Activated CD8-positive, alpha-beta memory T cell treated with anti-CD3 and anti-CD28 coated beads, Interleukin-2, amount 10 ng/mL, durations not matched to agents 7 days and 5 days (primary cell): ENCODE measurements at regions of chr17 and their contacts with region 1.

Region 1: DNA sequence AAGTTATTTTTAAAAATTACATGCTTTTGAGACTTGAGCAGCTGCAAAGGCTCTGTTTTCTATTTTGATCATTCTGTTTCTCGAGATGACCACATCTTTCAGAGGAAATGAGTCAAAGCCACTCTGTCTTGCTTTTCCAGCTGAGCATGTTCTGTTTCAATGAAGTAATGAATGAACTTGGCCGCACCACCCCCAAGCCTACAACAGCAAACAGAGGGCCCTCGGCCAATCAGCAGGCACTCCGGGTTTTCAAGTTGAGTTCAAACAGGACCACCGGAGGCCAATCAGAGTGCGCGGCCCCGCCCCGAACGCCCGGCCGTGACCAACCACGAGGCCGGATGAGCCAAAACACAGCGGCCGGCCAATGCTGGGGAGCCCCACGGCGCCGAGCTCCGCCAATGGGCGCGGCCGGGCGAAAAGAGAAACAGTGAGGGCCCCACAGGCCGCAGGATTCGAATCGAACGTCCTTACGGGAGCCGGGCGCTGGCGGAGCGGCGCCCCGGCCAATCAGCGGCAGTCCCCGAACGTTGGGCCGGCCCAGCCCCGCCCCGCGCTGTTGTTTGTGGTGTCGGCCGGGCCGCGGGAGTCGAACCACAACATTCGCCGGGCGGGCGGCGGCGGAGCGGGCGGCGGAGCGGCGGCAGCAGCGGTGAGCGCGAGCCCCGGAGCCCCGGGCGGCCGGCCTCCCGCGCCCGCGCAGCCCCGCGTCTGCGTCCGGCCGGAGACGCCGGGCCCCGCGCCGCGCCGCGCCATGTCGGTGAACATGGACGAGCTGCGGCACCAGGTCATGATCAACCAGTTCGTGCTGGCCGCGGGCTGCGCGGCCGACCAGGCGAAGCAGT is at the start of gene UBALD2:
- DNase-seq: peak; percentile 100
- ATAC-seq: peak; percentile 82
- H3K4me3 Mint-ChIP-seq: peak within 1 kb of the TSS; percentile 92
- H3K27ac Mint-ChIP-seq: peak within 1 kb of the TSS; percentile 99
- H3K4me1 Mint-ChIP-seq: peaks cover 54% of the 10 kb centered on the region
- H3K27me3 Mint-ChIP-seq: no peaks in the 10 kb centered on the region
- total RNA-seq, gene UBALD2: 260 to 406 TPM

Region 2: DNA sequence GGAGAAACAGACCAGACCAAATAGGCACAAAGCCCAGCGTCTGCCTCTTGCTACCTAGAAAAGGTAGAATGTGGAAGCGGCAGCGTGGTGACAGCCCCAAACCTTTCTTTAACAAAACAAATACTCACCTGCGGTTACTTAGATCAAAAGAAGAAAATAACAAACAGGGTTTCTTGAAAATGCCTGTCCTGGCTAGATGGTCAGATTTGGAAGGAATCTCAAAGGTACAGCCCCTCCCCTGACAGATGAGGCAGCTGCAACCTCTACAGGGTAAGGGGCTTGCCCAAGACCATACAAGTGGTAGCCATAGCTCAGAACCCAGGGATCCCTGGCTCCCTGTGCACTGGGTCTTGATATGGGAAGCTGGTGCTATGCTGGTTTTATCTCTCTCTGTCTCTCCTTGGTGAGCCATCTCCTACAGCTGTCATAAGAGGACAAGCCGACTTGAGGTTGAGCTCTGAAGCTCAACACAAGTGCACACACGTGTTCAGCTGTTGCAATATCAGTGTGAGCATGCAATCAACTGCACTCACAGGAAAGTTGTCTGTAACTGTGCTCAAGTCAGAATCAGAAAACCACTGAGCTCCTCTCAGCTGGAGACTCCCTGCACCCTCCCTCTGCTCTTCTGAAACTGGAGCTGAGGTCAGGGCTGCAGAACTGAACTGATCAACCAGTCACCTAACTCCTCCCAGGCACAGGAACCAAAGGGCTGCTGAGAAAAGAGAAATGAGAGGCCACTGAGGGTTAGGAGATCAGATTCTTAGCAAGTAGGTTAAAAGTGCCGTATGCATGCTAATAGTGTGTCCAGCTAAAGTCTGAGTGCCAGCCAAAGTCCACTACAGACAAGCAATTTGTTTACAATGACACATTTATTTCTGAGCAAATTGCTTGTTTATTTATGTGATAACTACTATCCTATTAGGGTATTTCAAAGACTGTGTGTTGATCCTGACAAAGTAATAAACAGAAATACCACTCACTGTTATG is 18.6 kb before region 1 on chr17:
- CTCF ChIA-PET with region 1: interaction called, 83 read pairs
- DNase-seq: peak; percentile 94
- ATAC-seq: peak; percentile 98
- H3K4me3 Mint-ChIP-seq: peak overlapping the region; percentile 50
- H3K27ac Mint-ChIP-seq: peak overlapping the region; percentile 90
- H3K4me1 Mint-ChIP-seq: peaks cover 73% of the 10 kb centered on the region
- H3K27me3 Mint-ChIP-seq: no peaks in the 10 kb centered on the region

Region 3: DNA sequence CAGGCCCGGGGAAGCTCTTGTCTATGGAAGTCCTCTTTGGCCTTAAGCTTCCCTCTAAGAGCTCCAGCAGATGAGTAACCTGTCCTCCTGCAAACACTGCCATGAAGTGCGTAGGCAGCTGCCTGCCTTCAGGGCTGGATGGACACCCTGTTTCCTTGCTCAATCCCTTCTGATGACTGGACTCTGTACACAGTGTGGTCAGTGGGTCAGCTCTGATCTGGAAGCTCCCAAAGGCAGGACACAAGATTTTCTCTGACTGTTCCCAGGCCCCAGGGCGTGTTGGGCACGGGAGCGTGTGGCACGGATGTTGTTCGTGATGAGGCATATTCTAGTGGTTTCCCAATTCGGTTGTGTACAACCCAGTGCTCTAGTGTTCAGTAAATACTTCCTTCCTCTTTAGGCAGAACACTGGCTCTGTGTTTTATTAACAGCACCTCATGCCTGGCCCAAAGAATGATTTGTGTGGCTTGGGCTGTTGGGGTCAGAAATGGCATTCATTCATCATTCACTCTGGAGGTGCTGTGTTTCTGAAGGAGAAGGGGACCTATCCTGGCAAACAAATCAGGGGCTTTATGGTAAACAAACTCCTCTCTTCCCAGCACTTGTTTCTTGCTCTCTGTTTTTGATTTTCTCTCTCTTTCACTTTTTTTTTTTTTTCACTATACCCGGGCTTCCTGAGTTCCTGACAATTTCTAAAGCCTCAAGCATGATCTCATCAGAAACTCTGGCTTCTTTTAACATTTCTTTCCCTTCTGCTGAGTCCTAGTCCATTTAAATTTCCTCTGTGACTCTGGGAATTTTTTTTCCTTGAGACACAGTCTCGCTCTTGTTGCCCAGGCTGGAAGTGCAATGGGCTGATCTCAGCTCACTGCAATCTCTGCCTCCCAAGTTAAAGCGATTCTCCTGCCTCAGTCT is 12.7 kb before region 1 on chr17:
- CTCF ChIA-PET with region 1: interaction called, 83 read pairs
- DNase-seq: peak; percentile 66
- ATAC-seq: peak; percentile 68
- H3K4me3 Mint-ChIP-seq: peak overlapping the region; percentile 67
- H3K27ac Mint-ChIP-seq: peak overlapping the region; percentile 98
- H3K4me1 Mint-ChIP-seq: peaks cover 77% of the 10 kb centered on the region
- H3K27me3 Mint-ChIP-seq: no peaks in the 10 kb centered on the region